Transverse colon (tissue), 4 donors: ENCODE measurements at regions of chr19 and their contacts with region 1.

Region 1: GRCh38 chr19:37874784-37875183 is 31.6 kb downstream of the WDR87 start:
- DNase-seq: no peak
- H3K4me3 ChIP-seq: no peak overlapping the region
- H3K27ac ChIP-seq: no peak overlapping the region
- H3K4me1 ChIP-seq: no peaks in the 10 kb centered on the region
- H3K27me3 ChIP-seq: no peaks in the 10 kb centered on the region
- CTCF ChIP-seq: no peak
- EP300 ChIP-seq: no peak
- POLR2A ChIP-seq: no peak

Region 2: DNA sequence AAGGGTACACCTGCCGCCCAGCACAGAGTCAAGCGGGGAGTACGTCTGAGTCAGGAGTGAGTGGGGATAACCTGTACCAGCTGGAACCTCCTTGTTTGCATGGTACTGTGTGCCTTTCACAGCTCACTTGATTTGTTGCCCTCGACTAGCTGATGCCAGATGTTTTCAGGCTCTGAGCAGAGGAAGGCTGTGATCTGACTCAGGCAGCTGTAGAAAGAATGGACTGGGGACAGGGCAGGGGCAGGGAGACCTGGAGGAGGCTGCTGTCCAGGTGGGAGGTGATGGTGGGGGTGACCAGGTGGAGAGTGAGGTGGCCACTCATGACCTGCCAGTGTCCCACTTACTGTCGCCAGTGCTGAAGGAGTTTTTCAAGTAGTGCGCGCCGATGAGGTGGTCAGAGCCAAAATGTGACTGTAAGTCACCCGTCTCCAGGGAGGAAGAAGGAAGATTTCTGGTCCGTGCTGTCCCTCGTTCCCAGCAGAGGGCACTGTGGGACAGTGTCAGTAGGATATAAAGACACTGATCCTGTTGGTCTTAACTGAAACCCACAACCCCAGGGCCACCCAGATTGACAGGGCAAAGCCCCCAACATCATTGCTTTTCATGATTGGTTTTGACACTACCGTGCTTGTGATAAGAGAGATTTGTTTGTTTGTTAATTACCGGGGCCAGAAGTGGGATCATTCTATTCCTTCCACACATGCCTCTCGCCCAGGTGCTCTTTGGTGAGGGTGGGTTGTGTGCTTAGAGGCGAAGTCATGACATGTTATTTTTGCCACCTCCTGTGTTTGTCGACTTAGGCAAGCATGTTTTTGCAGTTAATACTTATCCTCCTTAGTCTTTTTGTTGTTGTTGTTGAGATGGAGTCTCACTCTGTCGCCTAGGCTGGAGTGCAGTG is 220.9 kb after region 1 on chr19:
- in situ Hi-C with region 1: loop called in 1 of 4 experiments (anchors 25 kb)
- intact Hi-C with region 1: no loop called
- DNase-seq: peak; percentile 66
- H3K4me3 ChIP-seq: no peak overlapping the region
- H3K27ac ChIP-seq: no peak overlapping the region
- H3K4me1 ChIP-seq: no peaks in the 10 kb centered on the region
- H3K27me3 ChIP-seq: no peaks in the 10 kb centered on the region
- CTCF ChIP-seq: peak; percentile 44 to 56 (median 52)
- EP300 ChIP-seq: no peak
- POLR2A ChIP-seq: no peak

Region 3: DNA sequence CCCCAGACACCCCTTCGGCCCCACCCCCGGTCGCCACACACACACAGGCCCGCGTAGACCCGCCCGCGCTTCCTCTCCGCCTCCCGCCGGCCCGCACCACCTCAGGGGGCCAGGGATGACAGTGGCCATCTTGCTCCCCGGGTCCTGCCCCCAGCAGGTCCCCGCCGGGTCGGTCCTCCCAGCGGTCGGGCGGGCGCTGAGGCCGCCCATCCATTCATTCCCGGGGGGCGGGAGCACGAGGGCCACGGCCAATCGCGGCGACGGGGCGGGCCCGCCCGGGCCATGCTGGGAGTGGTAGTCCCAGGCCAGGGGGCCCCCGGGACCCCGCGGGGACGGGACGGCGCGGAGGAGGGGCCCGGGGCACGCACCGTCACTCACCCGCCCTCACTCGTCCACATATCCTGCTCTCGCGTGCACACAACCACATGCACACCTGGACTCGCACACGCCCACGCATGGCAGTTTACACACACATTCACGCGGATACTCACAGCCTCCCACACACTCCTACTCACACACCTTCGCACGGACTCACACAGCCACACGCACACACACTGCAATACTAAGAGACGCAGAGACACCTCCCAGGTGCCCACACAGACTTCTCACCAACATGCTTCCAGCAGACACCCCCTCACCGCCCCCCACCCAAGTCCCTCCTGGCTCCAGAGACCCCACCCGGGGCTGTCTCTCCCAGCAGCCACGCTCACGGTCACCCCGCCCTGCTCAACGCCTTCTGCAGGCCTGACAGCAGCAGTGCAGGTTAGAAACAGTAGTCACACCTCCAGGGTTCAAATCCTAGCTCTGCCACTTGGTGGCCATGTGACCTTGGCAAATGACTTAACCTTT is 349.5 kb after region 1 on chr19 and contains the start of gene DPF1:
- in situ Hi-C with region 1: loop called in 2 of 4 experiments (anchors 25 kb)
- intact Hi-C with region 1: no loop called
- DNase-seq: peak; percentile 24
- H3K4me3 ChIP-seq: peak within 1 kb of the TSS in 3 of 4 donors; percentile 9 to 36 (median 30)
- H3K27ac ChIP-seq: no peak within 1 kb of the TSS
- H3K4me1 ChIP-seq: peaks cover 15 to 26% (median 21%) of the 10 kb centered on the region in 4 donors
- H3K27me3 ChIP-seq: peaks cover 88% of the 10 kb centered on the region
- CTCF ChIP-seq: no peak
- EP300 ChIP-seq: no peak
- POLR2A ChIP-seq: no peak
- total RNA-seq, gene DPF1: not detected

Region 4: GRCh38 chr19:38229585-38230073 is 354.8 kb after region 1 on chr19:
- in situ Hi-C with region 1: loop called in 2 of 4 experiments (anchors 25 kb)
- intact Hi-C with region 1: no loop called
- DNase-seq: peak; percentile 35
- H3K4me3 ChIP-seq: peak overlapping the region in 1 of 4 donors; percentile 17
- H3K27ac ChIP-seq: no peak overlapping the region
- H3K4me1 ChIP-seq: peaks cover 11 to 14% (median 14%) of the 10 kb centered on the region in 4 donors
- H3K27me3 ChIP-seq: peaks cover 87% of the 10 kb centered on the region
- CTCF ChIP-seq: no peak
- EP300 ChIP-seq: no peak
- POLR2A ChIP-seq: no peak

Region 5: GRCh38 chr19:38335949-38336637 is 461.3 kb after region 1 on chr19:
- in situ Hi-C with region 1: loop called in 1 of 4 experiments (anchors 25 kb)
- intact Hi-C with region 1: no loop called
- DNase-seq: peak; percentile 98
- H3K4me3 ChIP-seq: peak overlapping the region; percentile 63 to 92 (median 84)
- H3K27ac ChIP-seq: peak overlapping the region; percentile 98 to 100 (median 99)
- H3K4me1 ChIP-seq: peaks cover 5 to 22% (median 7%) of the 10 kb centered on the region in 4 donors
- H3K27me3 ChIP-seq: no peaks in the 10 kb centered on the region
- CTCF ChIP-seq: no peak
- EP300 ChIP-seq: no peak
- POLR2A ChIP-seq: peak; percentile 91